ENCODE measurements at regions of chr21 and their contacts with region 1.

Region 1: GRCh38 chr21:28402616-28402989 is 590.1 kb downstream of the LTN1 start:
- DNase-seq: peak; percentile 26
- H3K4me3 ChIP-seq: no peak overlapping the region
- H3K27ac ChIP-seq: no peak overlapping the region
- H3K4me1 ChIP-seq: 0 out of 2 replicates have a peak, but pooled peaks cover 3% of the 10 kb centered on the region
- H3K27me3 ChIP-seq: no peaks in the 10 kb centered on the region

Region 2: GRCh38 chr21:28464095-28464494 is 61.5 kb after region 1 on chr21:
- in situ Hi-C with region 1: loop called (anchors 10 kb)
- DNase-seq: no peak
- H3K4me3 ChIP-seq: no peak overlapping the region
- H3K27ac ChIP-seq: no peak overlapping the region
- H3K4me1 ChIP-seq: peaks cover 9% of the 10 kb centered on the region
- H3K27me3 ChIP-seq: no peaks in the 10 kb centered on the region

Region 3: DNA sequence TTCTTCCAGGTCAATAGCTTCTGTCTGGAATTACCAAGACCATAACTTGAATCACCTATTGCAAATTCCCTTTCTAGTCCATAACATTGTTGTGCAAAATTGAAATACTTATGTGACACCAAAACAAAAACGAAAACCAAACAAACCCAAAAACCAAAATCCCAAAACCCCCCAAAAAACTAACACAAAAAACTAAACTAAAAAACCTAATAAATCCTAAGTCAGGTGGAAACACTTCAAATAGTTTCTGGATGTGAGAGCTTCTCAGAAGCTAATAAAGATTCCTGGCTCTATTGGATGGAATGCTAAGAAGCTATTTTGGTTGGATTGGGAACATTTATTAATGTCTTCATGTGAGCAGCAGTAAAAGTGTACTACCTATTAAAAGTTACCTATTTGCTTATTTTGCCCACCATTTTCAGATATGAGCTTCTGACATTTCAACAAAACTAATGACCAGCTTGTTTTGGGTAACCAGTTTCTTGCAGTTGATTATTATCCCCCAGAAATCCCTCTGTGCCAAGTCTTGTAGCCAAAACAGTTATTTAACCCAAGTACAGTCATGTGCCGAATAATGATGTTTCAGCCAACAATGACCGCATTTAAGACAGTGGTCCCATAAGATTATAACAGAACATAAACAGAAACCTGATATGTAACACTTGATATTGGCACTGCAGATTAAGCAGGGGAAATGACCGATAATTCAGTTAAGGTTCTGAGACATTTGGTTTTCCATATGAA is 513.7 kb after region 1 on chr21:
- in situ Hi-C with region 1: no loop called
- DNase-seq: no peak
- H3K4me3 ChIP-seq: no peak overlapping the region
- H3K27ac ChIP-seq: no peak overlapping the region
- H3K4me1 ChIP-seq: no peaks in the 10 kb centered on the region
- H3K27me3 ChIP-seq: no peaks in the 10 kb centered on the region

Measured in GM23248 (cell line).